ENCODE measurements at regions of chr2 and their contacts with region 1.

Region 1: DNA sequence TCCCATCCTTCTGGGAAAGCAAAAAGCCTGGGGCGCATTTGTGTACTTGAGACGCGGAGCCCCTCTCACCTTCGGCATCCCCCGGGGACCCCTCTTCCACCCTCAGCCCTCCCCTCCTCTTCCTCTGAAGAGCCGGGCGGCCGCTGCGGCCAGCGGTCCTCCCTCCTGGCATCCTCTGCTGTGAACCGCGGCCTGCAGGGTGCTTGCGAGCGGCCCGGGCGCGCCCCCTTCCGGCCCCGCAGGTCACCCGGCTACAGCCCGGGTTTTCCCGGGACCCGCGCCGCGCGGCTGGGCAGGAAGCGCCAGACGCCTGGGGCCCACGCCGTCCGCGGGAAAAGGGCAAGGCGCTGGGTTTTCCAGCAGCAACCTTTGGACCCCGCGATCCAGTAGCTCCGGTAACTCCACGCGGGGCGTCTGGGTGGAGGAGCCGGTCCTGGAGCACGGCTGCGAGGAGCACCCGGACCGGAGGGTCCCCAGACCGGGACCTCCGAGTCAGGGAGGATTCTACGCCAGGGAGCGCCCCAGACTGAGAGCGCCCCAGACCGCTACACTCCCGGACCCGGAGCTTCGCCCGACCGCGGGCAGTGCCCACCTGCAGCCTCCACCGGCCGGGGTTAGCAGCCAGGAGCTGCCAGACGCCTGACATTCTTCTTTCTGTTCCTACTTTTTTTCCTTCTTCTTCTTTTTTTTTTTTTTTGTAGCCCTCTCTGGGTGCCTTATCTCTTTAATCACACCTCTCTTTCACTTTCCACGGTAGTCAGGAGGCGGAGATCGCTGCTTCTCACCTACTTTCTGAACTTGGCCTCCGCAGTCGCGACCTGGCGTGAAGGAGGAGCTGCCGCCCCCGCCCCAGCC is at the start of gene IL18R1:
- DNase-seq: peak; percentile 58 to 84 (median 71)
- ATAC-seq: peak; percentile 100
- H3K4me3 ChIP-seq: peak within 1 kb of the TSS; percentile 69
- H3K27ac ChIP-seq: peak within 1 kb of the TSS; percentile 47; the same call in 2 of the 3 replicates
- H3K4me1 ChIP-seq: peaks cover 0 to 12% of the 10 kb centered on the region in 2 experiments; a peak in 2 of 5 replicates
- H3K27me3 ChIP-seq: no peaks in the 10 kb centered on the region
- CTCF ChIP-seq: peak; percentile 82 to 94 (median 90)
- EP300 ChIP-seq: no peak
- POLR2A ChIP-seq: no peak
- RAD21 ChIP-seq: peak; percentile 97 to 99
- polyA plus RNA-seq, gene IL18R1: 0.55 to 0.81 TPM

Region 2: DNA sequence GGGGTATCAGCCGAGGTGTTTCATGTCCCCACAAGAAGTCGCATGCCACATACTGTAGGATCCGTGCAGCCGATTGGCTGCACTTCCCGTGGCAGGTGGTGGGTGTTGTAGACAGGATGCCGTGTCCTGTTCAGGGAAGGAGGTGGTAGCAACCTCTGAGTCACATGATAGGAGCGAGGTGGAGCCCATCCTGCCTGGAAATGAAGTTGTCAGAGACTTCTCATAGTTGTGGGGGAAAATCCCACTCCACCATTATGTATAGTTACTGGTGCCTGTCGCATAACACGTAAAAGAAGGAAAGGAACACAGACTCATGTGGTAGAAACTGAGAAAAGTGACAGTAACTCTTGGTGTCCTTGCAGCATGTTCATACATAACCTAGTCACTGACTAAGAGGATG is 455.4 kb before region 1 on chr2:
- CTCF ChIA-PET with region 1: no interaction called
- POLR2A ChIA-PET with region 1: no interaction called
- in situ Hi-C with region 1: no loop called
- intact Hi-C with region 1: no loop called
- DNase-seq: no peak
- ATAC-seq: no peak; the same call in 2 of the 3 replicates
- H3K4me3 ChIP-seq: no peak overlapping the region
- H3K27ac ChIP-seq: no peak overlapping the region
- H3K4me1 ChIP-seq: no peaks in the 10 kb centered on the region
- H3K27me3 ChIP-seq: 0 out of 5 replicates have a peak, but pooled peaks cover 0 to 4% of the 10 kb centered on the region in 2 experiments
- CTCF ChIP-seq: no peak
- EP300 ChIP-seq: no peak
- POLR2A ChIP-seq: no peak
- RAD21 ChIP-seq: no peak

Region 3: GRCh38 chr2:102240640-102241370 is 114.9 kb before region 1 on chr2:
- CTCF ChIA-PET with region 1: interaction called, 7 read pairs
- POLR2A ChIA-PET with region 1: no interaction called
- in situ Hi-C with region 1: loop called (anchors 5 kb)
- intact Hi-C with region 1: loop called (anchors 5 kb)
- DNase-seq: peak; percentile 78 to 91 (median 80)
- ATAC-seq: peak; percentile 99
- H3K4me3 ChIP-seq: no peak overlapping the region
- H3K27ac ChIP-seq: no peak overlapping the region
- H3K4me1 ChIP-seq: peaks cover 0 to 7% of the 10 kb centered on the region in 2 experiments; a peak in 3 of 5 replicates
- H3K27me3 ChIP-seq: peaks cover 0 to 9% of the 10 kb centered on the region in 2 experiments; a peak in 1 of 5 replicates
- CTCF ChIP-seq: peak; percentile 94 to 98 (median 95)
- EP300 ChIP-seq: no peak; the same call in 1 of the 2 replicates
- POLR2A ChIP-seq: no peak
- RAD21 ChIP-seq: peak; percentile 95 to 98

Region 4: DNA sequence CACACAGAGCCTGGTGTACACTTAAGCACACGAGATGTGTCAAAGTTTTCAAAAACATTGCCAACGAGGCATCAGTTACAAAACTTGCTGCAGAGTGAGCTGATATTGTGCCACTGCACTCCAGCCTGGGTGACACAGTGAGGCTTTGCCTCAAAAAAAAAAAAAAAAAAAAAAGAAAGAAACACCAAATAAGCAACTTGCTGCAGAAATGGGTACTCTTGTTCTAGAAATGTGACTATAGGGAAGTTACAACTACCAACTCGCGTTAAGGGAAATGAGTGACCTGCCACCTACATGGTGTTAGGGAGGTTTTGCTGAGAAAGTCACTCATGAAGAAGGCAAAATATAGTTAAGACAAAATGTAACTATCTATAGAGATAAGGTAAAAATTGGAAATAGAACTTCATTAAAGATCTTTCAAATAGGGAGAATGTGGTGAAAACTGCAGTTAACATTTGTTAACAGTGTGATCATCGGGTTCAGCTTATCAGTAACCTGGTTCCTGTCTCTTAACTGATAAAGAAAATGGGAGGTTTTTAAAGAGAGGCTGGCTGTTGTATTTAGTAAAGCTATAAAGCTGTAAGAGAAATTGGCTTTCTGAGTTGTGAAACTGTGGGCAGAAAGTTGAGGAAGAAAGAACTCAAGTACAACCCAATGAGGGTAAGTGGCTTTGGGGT is 44.7 kb before region 1 on chr2 and contains the start of gene IL1RL1:
- CTCF ChIA-PET with region 1: no interaction called
- POLR2A ChIA-PET with region 1: no interaction called
- in situ Hi-C with region 1: no loop called
- intact Hi-C with region 1: no loop called
- DNase-seq: no peak
- ATAC-seq: no peak
- H3K4me3 ChIP-seq: no peak within 1 kb of the TSS
- H3K27ac ChIP-seq: no peak within 1 kb of the TSS
- H3K4me1 ChIP-seq: peaks cover 0 to 8% of the 10 kb centered on the region in 2 experiments; a peak in 3 of 5 replicates
- H3K27me3 ChIP-seq: peaks cover 0 to 8% of the 10 kb centered on the region in 2 experiments; a peak in 1 of 5 replicates
- CTCF ChIP-seq: no peak
- EP300 ChIP-seq: no peak
- POLR2A ChIP-seq: no peak
- RAD21 ChIP-seq: no peak
- polyA plus RNA-seq, gene IL1RL1: 0.42 to 0.59 TPM

Region 5: DNA sequence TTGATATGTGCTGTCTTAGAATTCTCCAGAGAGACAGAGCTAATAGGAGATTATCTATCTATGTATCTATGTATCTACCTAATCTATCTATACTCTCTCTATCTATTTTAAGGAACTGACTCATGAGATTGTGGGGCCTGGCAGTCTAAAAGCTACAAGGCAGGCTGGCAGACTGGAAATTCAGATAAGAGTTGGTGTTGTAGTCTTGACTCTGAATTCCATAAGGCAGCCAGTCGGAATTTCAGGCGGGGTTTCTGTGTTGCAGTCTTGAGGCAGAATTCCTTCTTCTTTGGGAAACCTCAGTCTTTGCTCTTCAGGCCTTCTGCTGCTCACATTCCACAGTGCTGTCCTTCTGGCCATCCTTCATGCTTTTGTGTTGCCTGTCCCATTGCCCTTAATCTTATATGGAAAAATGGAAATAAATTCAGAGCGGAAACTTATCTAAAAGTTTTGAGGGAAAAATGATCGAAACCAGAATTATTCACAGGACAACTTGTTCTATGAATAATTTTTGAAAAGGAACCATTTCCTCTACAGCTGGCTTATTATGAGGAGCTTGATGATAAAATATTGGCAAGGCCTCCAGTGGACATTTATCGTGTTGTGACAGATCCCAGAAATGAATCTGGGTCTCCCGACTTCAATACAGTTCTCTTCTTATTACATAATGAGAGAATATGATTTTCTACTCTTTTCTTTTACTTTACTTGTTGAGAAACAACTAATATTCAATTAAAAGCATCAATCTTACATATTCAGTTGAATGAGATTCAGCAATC is 33.6 kb before region 1 on chr2:
- CTCF ChIA-PET with region 1: no interaction called
- POLR2A ChIA-PET with region 1: no interaction called
- in situ Hi-C with region 1: no loop called
- intact Hi-C with region 1: loop called (anchors 1 kb)
- DNase-seq: no peak
- ATAC-seq: no peak
- H3K4me3 ChIP-seq: no peak overlapping the region
- H3K27ac ChIP-seq: no peak overlapping the region
- H3K4me1 ChIP-seq: no peaks in the 10 kb centered on the region; a peak in 1 of 5 replicates
- H3K27me3 ChIP-seq: no peaks in the 10 kb centered on the region
- CTCF ChIP-seq: no peak
- EP300 ChIP-seq: no peak
- POLR2A ChIP-seq: no peak
- RAD21 ChIP-seq: no peak

Region 6: DNA sequence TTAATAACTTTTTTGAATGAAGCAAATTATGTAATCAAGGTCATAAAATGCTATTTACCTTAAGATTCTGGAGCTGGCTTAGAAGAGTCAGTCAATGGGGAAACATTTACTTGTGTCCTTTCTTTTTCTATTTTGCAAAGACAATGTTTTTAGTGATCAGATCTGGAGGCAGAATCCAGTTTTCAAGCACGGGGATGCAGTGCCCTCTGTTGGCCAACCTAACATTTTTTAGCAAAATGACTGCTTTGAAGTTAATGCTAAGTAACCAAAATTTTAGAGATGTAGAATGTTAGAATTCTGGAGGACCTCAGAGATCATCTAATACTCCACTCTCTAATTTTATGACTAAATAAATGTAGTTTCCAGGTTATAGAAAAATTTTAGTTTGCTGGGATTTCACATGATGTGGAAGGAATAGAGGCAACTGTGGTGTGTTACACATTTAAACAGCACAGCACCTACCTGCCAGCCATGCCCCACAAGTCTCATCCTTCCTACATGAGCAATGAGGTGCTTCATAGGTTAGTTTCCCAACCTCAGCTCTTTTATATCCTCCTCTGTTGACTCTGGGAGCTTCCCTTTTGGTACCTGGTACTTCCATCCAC is 93.7 kb after region 1 on chr2:
- CTCF ChIA-PET with region 1: interaction called, 5 read pairs
- POLR2A ChIA-PET with region 1: no interaction called
- in situ Hi-C with region 1: loop called (anchors 5 kb)
- intact Hi-C with region 1: no loop called
- DNase-seq: peak; percentile 35 to 70 (median 40)
- ATAC-seq: peak; percentile 72; the same call in 2 of the 3 replicates
- H3K4me3 ChIP-seq: no peak overlapping the region
- H3K27ac ChIP-seq: no peak overlapping the region
- H3K4me1 ChIP-seq: no peaks in the 10 kb centered on the region
- H3K27me3 ChIP-seq: no peaks in the 10 kb centered on the region
- CTCF ChIP-seq: peak; percentile 66 to 84 (median 73); a peak in 5 of 6 replicates
- EP300 ChIP-seq: no peak
- POLR2A ChIP-seq: no peak
- RAD21 ChIP-seq: peak; percentile 86

Region 7: GRCh38 chr2:102592597-102592996 is 236.8 kb after region 1 on chr2:
- CTCF ChIA-PET with region 1: no interaction called
- POLR2A ChIA-PET with region 1: no interaction called
- in situ Hi-C with region 1: no loop called
- intact Hi-C with region 1: no loop called
- DNase-seq: peak; percentile 15 to 21 (median 18)
- ATAC-seq: no peak
- H3K4me3 ChIP-seq: no peak overlapping the region
- H3K27ac ChIP-seq: no peak overlapping the region
- H3K4me1 ChIP-seq: no peaks in the 10 kb centered on the region
- H3K27me3 ChIP-seq: peaks cover 4% of the 10 kb centered on the region in 2 experiments; a peak in 1 of 5 replicates
- CTCF ChIP-seq: peak; percentile 36 to 49 (median 43); a peak in 4 of 6 replicates
- EP300 ChIP-seq: no peak
- POLR2A ChIP-seq: no peak
- RAD21 ChIP-seq: peak; percentile 37 to 69

Measured in K562 (cell line).